ENCODE measurements at regions of chr18 and their contacts with region 1.

Region 1: DNA sequence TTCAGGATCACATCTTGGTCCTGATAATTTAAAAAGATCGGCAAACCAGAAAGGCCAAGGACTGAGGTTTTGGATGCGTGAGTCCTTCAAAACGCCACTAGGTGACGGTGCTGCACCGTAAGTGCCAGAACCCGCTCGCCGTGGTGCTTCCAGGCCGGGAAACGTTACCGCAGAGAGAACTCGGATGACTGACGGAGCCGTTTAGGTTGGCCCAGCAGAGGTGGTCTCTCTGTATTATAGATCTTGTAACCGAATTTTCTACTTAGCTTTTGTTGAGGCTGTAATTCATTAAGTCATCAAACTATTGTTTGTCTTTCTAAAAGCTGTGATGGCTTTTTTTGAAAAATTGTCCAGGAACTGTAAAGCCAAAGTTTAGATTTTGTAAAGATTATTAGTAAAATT is 39.8 kb upstream of the ADCYAP1 start:
- DNase-seq: peak; percentile 30 to 75
- ATAC-seq: peak; percentile 80 to 95
- H3K4me3 ChIP-seq: no peak overlapping the region
- H3K27ac ChIP-seq: no peak overlapping the region
- H3K4me1 ChIP-seq: no peaks in the 10 kb centered on the region
- CTCF ChIP-seq: peak; percentile 89
- EP300 ChIP-seq: no peak
- POLR2A ChIP-seq: no peak
- RAD21 ChIP-seq: peak; percentile 92 to 97

Region 2: DNA sequence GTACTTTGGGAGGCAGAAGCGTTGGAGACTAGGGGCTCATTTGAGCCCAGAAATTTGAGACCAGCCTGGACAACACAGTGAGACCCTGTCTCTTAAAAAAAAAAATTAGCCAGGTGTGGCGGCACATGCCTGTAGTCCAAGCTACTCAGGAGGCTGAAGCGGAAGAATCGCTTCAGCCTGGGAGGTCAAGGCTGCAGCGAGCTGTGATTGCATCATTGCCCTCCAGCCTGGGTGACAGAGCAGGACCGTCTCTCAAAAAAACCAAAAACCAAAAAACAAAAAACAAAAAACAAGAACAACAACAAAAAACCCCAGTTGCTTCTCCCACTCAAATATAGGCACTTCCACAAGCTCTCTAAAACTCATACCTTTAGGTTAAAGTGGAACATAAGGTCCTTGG is 12.4 kb after region 1 on chr18:
- CTCF ChIA-PET with region 1: interaction called, 11 read pairs
- POLR2A ChIA-PET with region 1: no interaction called
- DNase-seq: no peak
- ATAC-seq: no peak
- H3K4me3 ChIP-seq: no peak overlapping the region
- H3K27ac ChIP-seq: no peak overlapping the region
- H3K4me1 ChIP-seq: no peaks in the 10 kb centered on the region
- CTCF ChIP-seq: no peak
- EP300 ChIP-seq: no peak
- POLR2A ChIP-seq: no peak
- RAD21 ChIP-seq: no peak